Vagina (tissue), 2 donors: ENCODE measurements at regions of chr11 and their contacts with region 1.

Region 1: GRCh38 chr11:65613929-65614674 is at the start of gene MAP3K11:
- DNase-seq: peak in 1 of 2 donors; percentile 97
- H3K4me3 ChIP-seq: peak within 1 kb of the TSS; percentile 72 to 95
- H3K27ac ChIP-seq: peak within 1 kb of the TSS; percentile 90
- H3K4me1 ChIP-seq: peaks cover 60% of the 10 kb centered on the region
- H3K27me3 ChIP-seq: no peaks in the 10 kb centered on the region
- CTCF ChIP-seq: no peak
- POLR2A ChIP-seq: peak in 1 of 2 donors; percentile 89
- total RNA-seq, gene MAP3K11: 38.1 TPM

Region 2: DNA sequence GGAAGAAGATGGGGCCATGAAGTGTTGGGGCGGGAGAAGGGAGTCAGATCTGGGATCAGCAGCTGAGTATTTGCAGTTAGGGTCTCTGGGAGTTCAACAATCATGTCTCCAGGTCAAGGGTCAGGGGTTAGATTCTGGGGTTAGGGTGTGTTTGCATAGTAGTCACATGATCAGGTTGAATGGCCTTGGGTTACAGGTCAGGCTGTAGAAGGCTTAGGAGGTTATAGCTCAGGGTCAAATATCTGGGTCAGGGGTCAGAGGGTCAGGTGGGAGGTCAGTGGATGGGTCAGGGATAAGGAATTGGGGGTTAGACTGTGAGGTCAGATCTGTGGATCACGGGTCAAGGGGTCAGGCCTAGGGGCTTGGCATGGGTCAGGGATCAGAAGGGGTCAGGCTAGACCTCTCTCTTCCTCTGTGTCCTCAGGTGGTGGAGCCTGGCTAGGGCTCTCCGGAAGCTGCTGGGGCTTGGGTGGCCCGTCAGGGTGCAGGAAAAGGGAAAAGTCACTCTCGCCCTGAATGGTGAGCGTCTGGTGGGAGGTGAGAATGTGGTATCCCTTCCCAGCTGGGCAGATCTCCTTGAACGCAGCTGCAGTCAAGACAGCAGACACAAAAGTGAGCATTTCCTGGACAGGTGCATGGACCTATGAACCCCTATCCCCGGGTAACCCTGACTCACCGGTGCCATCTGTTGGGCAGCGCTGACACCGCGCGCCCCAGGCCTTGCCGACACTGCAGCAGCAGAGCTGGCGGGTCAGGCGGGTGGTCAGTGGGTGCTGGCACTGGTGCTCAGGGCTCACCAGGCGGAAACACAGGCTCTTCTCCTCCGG is 62.3 kb before region 1 on chr11:
- intact Hi-C with region 1: no loop called
- DNase-seq: no peak
- H3K4me3 ChIP-seq: no peak overlapping the region
- H3K27ac ChIP-seq: no peak overlapping the region
- H3K4me1 ChIP-seq: peaks cover 43% of the 10 kb centered on the region
- H3K27me3 ChIP-seq: no peaks in the 10 kb centered on the region
- CTCF ChIP-seq: no peak
- POLR2A ChIP-seq: no peak

Region 3: GRCh38 chr11:65569973-65570918 is 43.9 kb before region 1 on chr11 and contains the start of gene ZNRD2:
- intact Hi-C with region 1: loop called (anchors 5 kb)
- DNase-seq: peak; percentile 97 to 99
- H3K4me3 ChIP-seq: peak within 1 kb of the TSS; percentile 81 to 98
- H3K27ac ChIP-seq: peak within 1 kb of the TSS; percentile 93
- H3K4me1 ChIP-seq: peaks cover 78% of the 10 kb centered on the region
- H3K27me3 ChIP-seq: no peaks in the 10 kb centered on the region
- CTCF ChIP-seq: peak; percentile 18 to 51 (median 24)
- POLR2A ChIP-seq: peak in 1 of 2 donors; percentile 49
- total RNA-seq, gene ZNRD2: 68.5 TPM